Left ventricle myocardium inferior (tissue), 1 donor: ENCODE measurements at regions of chr4 and their contacts with region 1.

Region 1: GRCh38 chr4:139295206-139295941 is 5.9 kb upstream of the NAA15 start:
- DNase-seq: peak; percentile 97
- H3K4me3 ChIP-seq: peak overlapping the region; percentile 78
- H3K27ac ChIP-seq: peak overlapping the region; percentile 92
- H3K4me1 ChIP-seq: peaks cover 65% of the 10 kb centered on the region
- H3K27me3 ChIP-seq: no peaks in the 10 kb centered on the region
- CTCF ChIP-seq: peak; percentile 95

Region 2: GRCh38 chr4:139030614-139031235 is 264.6 kb before region 1 on chr4:
- intact Hi-C with region 1: loop called (anchors 10 kb)
- DNase-seq: peak; percentile 40
- H3K4me3 ChIP-seq: no peak overlapping the region
- H3K27ac ChIP-seq: peak overlapping the region; percentile 89
- H3K4me1 ChIP-seq: peaks cover 32% of the 10 kb centered on the region
- H3K27me3 ChIP-seq: no peaks in the 10 kb centered on the region
- CTCF ChIP-seq: peak; percentile 84

Region 3: DNA sequence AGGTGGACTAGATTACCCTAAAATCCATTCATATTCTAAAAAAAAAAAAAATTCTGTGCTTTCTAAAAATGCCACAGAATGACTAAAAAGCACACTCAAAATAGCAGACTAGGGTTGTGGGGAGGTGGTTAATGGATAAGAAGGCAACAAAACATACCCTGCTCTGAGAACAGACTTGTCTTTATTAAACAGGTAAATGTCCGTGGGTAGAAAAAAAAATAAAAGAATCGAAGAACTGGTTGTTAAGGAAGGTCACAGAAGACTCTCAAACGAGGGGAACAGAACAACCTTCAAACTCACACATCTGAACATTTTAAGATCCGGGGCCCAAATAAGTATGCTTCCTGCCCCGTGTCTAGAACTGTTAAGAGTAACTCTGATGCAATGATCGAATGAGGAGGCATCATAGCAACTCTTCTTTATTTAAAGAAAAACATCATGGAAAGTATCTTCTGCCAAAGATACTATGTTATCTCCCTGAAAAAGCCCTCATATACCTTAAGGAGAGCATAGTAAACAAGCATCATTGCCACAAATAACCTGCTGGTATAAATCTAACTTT is 186.7 kb before region 1 on chr4:
- intact Hi-C with region 1: loop called (anchors 10 kb)
- DNase-seq: no peak
- H3K4me3 ChIP-seq: no peak overlapping the region
- H3K27ac ChIP-seq: no peak overlapping the region
- H3K4me1 ChIP-seq: peaks cover 20% of the 10 kb centered on the region
- H3K27me3 ChIP-seq: no peaks in the 10 kb centered on the region
- CTCF ChIP-seq: no peak

Region 4: GRCh38 chr4:139177868-139178611 is 117.3 kb before region 1 on chr4:
- intact Hi-C with region 1: loop called (anchors 5 kb)
- DNase-seq: peak; percentile 96
- H3K4me3 ChIP-seq: peak overlapping the region; percentile 99
- H3K27ac ChIP-seq: peak overlapping the region; percentile 100
- H3K4me1 ChIP-seq: peaks cover 48% of the 10 kb centered on the region
- H3K27me3 ChIP-seq: no peaks in the 10 kb centered on the region
- CTCF ChIP-seq: no peak